Mammary epithelial cell (primary cell): ENCODE measurements at regions of chr1 and their contacts with region 1.

Region 1: DNA sequence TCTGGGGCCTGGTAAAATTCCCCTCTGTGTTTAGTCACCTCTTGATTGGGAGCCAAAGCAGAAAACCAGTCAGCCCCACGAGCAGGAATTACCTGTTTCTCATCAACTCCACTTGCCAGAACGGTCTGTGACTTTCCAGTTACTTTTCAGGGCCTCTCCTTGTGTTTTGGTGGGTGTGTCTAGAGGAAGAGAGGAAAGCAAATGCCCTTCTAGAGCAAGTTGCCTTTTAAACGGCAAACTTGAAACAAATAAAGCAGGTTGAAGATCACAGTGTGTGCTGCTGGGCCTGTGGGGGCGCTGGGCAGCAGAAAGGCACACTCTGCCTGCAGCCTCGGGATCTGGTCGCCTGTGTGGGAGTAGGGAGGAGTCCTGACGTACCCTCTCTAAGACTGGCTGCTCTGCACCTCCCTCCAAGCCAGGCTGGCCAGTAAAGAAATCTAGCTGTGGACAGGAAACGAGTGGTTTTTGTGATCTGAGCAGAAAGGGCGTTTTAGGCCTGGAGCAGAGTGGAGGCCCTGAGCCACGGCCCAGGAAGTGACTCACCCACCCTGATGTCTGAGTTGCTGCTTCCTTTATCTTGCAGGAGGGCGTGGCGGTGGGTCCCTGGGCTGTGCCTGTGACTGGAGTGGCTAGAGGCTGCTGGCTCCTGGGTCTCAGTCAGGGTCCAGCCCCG is 11.1 kb upstream of the S100A11 start:
- DNase-seq: peak; percentile 99
- H3K4me3 ChIP-seq: peak overlapping the region; percentile 6 to 37 (median 25)
- H3K27ac ChIP-seq: peak overlapping the region; percentile 98
- H3K4me1 ChIP-seq: peaks cover 74% of the 10 kb centered on the region
- H3K27me3 ChIP-seq: no peaks in the 10 kb centered on the region
- CTCF ChIP-seq: peak; percentile 27 to 46

Region 2: GRCh38 chr1:151984313-151984956 is 63.4 kb before region 1 on chr1:
- CTCF ChIA-PET with region 1: no interaction called
- dilution Hi-C with region 1: no loop called
- in situ Hi-C with region 1: no loop called
- intact Hi-C with region 1: no loop called
- DNase-seq: no peak
- H3K4me3 ChIP-seq: no peak overlapping the region
- H3K27ac ChIP-seq: no peak overlapping the region
- H3K4me1 ChIP-seq: peaks cover 50% of the 10 kb centered on the region
- H3K27me3 ChIP-seq: no peaks in the 10 kb centered on the region
- CTCF ChIP-seq: no peak

Region 3: DNA sequence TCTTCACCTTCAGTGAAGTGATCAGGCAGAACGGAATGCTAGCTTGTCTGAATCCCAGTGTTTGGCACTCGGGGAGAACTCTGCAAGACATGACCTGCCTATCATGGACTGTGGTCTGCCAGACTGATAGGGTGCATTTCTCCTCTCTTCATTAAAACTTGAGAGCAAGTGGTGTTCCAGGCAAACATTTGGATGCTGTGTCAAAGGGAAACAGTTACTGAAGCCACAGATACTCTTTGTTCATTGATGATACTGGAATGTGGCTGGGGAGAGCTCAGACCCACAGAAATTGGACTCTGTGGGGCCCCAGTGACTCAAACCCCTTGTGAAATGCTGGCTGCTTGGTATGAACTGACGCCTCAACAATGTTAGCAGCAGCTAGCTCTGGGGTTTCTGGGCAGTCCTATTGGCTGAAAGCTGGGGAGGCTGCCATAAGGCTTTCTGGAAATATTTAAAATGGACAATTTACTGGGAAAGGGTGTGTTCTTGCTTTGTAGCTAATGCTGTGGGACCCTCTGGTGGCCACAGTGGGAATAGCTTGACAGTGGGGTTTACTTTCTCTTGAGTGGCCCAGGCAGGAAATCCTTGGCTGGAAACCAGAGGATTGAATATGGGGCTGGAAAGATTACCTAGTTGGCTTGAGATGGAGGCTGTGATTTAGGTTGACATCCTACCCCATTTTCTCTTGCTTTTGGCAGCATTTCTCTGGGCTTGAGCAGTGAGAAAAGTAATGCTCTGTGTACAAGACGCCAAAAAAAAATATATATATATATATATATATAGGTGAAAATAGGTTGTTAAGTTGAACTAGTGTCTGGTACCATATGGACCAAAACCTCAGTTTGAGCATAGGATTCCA is 46.2 kb before region 1 on chr1:
- CTCF ChIA-PET with region 1: no interaction called
- dilution Hi-C with region 1: no loop called
- in situ Hi-C with region 1: no loop called
- intact Hi-C with region 1: loop called (anchors 1 kb)
- DNase-seq: peak; percentile 100
- H3K4me3 ChIP-seq: no peak overlapping the region
- H3K27ac ChIP-seq: peak overlapping the region; percentile 96
- H3K4me1 ChIP-seq: peaks cover 73% of the 10 kb centered on the region
- H3K27me3 ChIP-seq: no peaks in the 10 kb centered on the region
- CTCF ChIP-seq: peak; percentile 92 to 96

Region 4: DNA sequence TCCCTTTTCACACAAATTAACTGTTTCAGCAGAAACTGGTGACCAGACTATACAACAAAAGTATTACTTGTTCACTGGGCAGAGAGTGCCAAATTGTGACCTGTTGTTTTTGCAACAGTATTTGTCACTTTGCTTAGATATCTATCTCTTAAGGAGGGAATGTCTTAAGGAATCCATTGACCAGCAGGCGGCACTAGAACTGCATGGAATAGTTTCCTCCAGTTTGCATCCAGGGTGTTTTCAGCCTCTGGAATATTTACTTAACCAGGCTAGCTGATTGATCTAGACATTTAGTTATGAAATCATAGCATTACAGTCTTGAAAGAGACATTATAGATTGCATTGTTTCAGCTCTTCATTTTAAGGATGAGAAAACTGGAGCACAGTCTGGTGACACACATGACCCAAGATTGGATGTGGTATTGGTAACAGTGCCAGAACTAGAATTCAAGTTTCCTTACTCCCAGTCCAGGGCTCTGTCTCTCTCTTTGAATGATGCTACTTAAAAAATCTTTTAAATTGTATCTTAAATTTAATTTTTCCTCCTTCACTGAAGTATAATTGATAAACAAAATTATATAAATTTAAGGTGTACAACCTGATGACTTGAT is 94.2 kb after region 1 on chr1:
- CTCF ChIA-PET with region 1: no interaction called
- dilution Hi-C with region 1: loop called (anchors 5 kb)
- in situ Hi-C with region 1: loop called in 1 of 2 experiments (anchors 10 kb)
- intact Hi-C with region 1: loop called (anchors 1 kb)
- DNase-seq: peak; percentile 54
- H3K4me3 ChIP-seq: no peak overlapping the region
- H3K27ac ChIP-seq: no peak overlapping the region
- H3K4me1 ChIP-seq: no peaks in the 10 kb centered on the region
- H3K27me3 ChIP-seq: peaks cover 7% of the 10 kb centered on the region
- CTCF ChIP-seq: peak; percentile 91 to 92

Region 5: DNA sequence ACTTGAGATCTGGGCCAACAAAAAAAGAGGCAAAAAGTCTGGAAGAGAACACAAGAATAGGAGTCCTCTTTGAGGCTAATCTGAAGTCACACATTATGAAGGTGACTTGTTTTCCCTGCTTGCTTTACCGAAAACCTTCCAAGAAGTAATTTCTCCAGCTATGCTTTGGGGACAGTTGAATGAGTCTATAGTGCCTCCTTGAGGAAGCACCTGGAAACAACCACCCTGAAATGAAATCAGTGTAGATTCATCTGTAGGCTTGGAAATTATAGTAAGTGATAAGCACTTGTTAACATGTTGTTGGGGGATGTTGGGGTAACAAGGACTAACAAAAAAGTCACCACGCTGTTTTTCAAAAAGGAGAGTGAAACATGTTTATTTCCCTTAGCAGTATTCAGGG is 134.6 kb after region 1 on chr1:
- CTCF ChIA-PET with region 1: interaction called, 14 read pairs
- dilution Hi-C with region 1: no loop called
- in situ Hi-C with region 1: loop called in 1 of 2 experiments (anchors 5 kb)
- intact Hi-C with region 1: loop called (anchors 1 kb)
- DNase-seq: no peak
- H3K4me3 ChIP-seq: no peak overlapping the region
- H3K27ac ChIP-seq: peak overlapping the region; percentile 72
- H3K4me1 ChIP-seq: peaks cover 59% of the 10 kb centered on the region
- H3K27me3 ChIP-seq: no peaks in the 10 kb centered on the region
- CTCF ChIP-seq: peak; percentile 84 to 87

Region 6: DNA sequence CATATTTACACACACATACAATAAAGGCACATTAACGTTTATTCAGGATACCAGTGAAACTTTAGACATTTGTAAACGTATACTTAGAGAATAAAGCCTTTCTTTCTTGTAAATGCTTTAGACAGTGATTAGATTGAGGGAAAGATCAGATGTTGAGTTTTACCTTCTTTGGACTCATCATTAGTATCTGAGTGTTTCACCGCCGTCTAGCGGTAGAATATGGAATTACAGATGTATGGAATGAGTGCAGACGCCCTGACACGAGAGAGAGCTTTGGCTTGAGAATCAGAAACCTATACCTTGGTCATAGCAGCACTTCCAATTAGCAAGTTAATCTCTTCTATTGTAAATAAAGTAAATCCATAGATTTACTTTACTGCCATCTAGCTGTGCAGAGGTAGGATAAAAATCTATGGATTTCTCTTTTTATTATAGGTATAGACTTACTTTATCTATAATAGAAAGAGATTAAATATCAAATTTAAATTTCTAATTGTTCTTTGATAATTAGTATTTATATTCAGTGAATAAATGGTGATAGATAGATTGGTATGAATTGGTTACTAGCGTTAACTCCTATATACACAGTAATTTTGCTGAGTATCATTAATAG is 299.4 kb after region 1 on chr1:
- CTCF ChIA-PET with region 1: no interaction called
- dilution Hi-C with region 1: no loop called
- in situ Hi-C with region 1: loop called in 1 of 2 experiments (anchors 10 kb)
- intact Hi-C with region 1: loop called (anchors 1 kb)
- DNase-seq: peak; percentile 64
- H3K4me3 ChIP-seq: no peak overlapping the region
- H3K27ac ChIP-seq: no peak overlapping the region
- H3K4me1 ChIP-seq: no peaks in the 10 kb centered on the region
- H3K27me3 ChIP-seq: peaks cover 7% of the 10 kb centered on the region
- CTCF ChIP-seq: peak; percentile 93 to 99

Region 7: GRCh38 chr1:152459596-152460528 is 412.0 kb after region 1 on chr1:
- CTCF ChIA-PET with region 1: no interaction called
- dilution Hi-C with region 1: no loop called
- in situ Hi-C with region 1: no loop called
- intact Hi-C with region 1: loop called (anchors 1 kb)
- DNase-seq: peak; percentile 48
- H3K4me3 ChIP-seq: no peak overlapping the region
- H3K27ac ChIP-seq: no peak overlapping the region
- H3K4me1 ChIP-seq: peaks cover 5% of the 10 kb centered on the region
- H3K27me3 ChIP-seq: no peaks in the 10 kb centered on the region
- CTCF ChIP-seq: peak; percentile 86 to 94